Vagina (tissue), 2 donors: ENCODE measurements at regions of chr22 and their contacts with region 1.

Region 1: DNA sequence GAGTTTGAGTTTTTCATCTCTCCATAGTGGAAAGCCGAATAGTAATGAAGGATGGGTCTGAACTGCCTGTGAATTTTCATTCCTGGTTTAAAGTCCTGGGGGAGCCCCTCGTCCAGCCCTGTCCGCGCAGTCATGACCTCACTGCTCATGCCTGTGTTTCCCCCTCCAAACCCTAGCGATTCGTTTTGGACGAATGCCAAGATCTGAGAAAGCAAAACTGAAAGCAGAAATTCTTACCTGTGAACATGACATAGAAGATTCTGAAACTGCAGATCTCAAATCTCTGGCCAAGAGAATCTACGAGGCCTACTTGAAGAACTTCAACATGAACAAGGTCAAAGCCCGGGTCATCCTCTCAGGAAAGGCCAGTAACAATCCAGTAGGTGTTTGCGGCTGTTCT is 30.5 kb downstream of the CDPF1 start:
- DNase-seq: no peak
- H3K4me3 ChIP-seq: no peak overlapping the region
- H3K27ac ChIP-seq: no peak overlapping the region
- H3K4me1 ChIP-seq: no peaks in the 10 kb centered on the region
- H3K27me3 ChIP-seq: no peaks in the 10 kb centered on the region
- CTCF ChIP-seq: no peak
- POLR2A ChIP-seq: no peak

Region 2: GRCh38 chr22:46162771-46163556 is 56.7 kb before region 1 on chr22:
- intact Hi-C with region 1: loop called (anchors 2 kb)
- DNase-seq: no peak
- H3K4me3 ChIP-seq: no peak overlapping the region
- H3K27ac ChIP-seq: no peak overlapping the region
- H3K4me1 ChIP-seq: no peaks in the 10 kb centered on the region
- H3K27me3 ChIP-seq: no peaks in the 10 kb centered on the region
- CTCF ChIP-seq: no peak
- POLR2A ChIP-seq: no peak